Endothelial cell of umbilical vein (primary cell): ENCODE measurements at regions of chr12 and their contacts with region 1.

Region 1: DNA sequence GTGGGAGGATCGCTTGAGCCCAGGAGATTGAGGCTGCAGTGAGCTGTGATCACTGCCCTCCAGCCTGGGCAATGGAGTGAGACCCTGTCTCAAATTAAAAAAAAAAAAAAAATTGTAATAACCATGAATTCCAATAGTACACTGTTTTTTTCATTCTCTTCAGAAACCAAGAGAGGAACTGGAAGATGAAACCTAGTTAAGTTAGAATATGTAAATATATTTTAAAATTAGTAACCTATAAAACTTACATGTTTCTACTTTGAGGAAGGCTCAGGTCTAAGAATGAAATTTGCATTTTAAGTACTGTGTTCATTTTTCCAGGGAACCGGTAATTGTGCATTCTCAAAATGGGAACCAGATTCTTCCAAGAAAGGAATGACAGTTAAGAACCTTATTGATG is 18.8 kb downstream of the KNTC1 start:
- DNase-seq: no peak
- H3K4me3 ChIP-seq: no peak overlapping the region
- H3K27ac ChIP-seq: no peak overlapping the region
- H3K4me1 ChIP-seq: no peaks in the 10 kb centered on the region
- H3K27me3 ChIP-seq: no peaks in the 10 kb centered on the region
- CTCF ChIP-seq: no peak
- POLR2A ChIP-seq: no peak

Region 2: DNA sequence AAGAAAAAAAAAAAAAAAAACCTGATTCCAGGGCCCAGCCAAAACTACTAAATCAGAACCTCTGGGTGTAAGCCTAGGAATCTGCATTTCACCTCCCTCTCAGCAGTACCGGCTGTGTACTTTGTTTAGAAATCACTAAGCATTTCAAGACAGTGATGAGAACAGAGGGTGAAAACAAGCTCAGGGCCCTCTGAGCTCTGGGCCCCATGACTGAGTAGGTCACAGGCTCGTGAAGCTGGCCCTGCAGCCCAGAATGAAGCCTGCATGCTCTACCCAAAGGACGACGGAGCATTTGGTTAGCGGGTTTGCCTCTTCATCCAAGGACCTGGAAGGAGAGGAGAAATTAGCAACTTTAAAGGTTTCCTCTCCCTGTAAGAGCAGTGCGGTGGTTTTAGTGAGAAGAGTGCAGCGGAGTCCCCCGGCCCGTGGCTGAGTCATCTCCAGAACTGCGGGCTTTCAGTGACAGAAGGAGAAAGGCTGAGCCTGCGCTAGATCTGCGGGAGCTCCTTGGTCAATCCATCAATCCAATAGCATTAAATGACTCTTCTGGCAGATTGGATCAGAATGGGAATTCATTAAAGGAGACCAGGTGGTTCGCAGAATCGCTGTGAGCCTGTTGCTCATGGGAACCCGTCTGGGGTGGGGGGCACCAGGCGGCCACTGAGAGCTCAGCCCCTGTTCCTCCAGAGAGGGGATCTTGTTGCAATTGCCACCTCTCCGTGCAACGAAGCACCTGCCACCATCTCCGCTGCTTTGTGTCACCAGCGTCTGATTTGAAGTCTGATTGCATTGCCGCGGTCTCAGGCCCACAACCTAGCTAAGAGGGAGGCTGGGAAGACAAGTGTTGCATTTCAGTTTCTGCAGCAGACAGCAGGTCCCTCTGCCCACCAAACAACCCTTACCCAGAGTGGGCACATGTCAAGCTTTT is 379.2 kb before region 1 on chr12:
- CTCF ChIA-PET with region 1: no interaction called
- POLR2A ChIA-PET with region 1: no interaction called
- dilution Hi-C with region 1: no loop called
- intact Hi-C with region 1: no loop called
- DNase-seq: no peak
- H3K4me3 ChIP-seq: no peak overlapping the region
- H3K27ac ChIP-seq: no peak overlapping the region
- H3K4me1 ChIP-seq: no peaks in the 10 kb centered on the region
- H3K27me3 ChIP-seq: peaks cover 0 to 3% of the 10 kb centered on the region in 2 experiments
- CTCF ChIP-seq: no peak
- POLR2A ChIP-seq: no peak

Region 3: GRCh38 chr12:122366685-122367475 is 179.0 kb before region 1 on chr12:
- CTCF ChIA-PET with region 1: no interaction called
- POLR2A ChIA-PET with region 1: no interaction called
- dilution Hi-C with region 1: no loop called
- intact Hi-C with region 1: no loop called
- DNase-seq: peak; percentile 73
- H3K4me3 ChIP-seq: no peak overlapping the region
- H3K27ac ChIP-seq: peak overlapping the region; percentile 57
- H3K4me1 ChIP-seq: peaks cover 31% of the 10 kb centered on the region
- H3K27me3 ChIP-seq: no peaks in the 10 kb centered on the region
- CTCF ChIP-seq: no peak
- POLR2A ChIP-seq: no peak

Region 4: GRCh38 chr12:122569288-122569687 is 23.4 kb after region 1 on chr12:
- CTCF ChIA-PET with region 1: interaction called, 3 read pairs
- POLR2A ChIA-PET with region 1: no interaction called
- dilution Hi-C with region 1: no loop called
- intact Hi-C with region 1: loop called (anchors 2 kb)
- DNase-seq: no peak
- H3K4me3 ChIP-seq: no peak overlapping the region
- H3K27ac ChIP-seq: no peak overlapping the region
- H3K4me1 ChIP-seq: no peaks in the 10 kb centered on the region
- H3K27me3 ChIP-seq: no peaks in the 10 kb centered on the region
- CTCF ChIP-seq: no peak
- POLR2A ChIP-seq: no peak

Region 5: DNA sequence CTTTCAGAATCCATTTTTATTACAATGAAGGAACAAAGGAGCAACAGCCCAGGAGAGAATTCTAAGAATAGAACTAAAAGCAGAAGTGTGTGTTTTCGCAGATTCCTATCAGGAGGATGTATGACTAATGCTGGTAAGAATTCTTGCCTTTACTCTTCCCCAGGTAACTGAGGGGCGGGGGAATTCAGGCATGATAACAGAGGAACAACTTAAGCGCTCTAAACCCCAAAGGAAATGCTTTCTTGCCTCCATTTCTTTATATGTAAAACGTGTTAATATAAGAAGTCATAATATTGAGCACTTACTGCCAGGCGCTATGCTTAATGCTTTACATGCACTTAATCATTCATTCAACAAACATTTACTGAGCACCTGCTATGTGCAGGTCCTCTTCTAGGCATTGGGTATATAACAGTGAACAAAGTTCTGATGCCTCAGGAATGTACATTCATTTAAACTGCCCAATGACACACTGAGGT is 180.3 kb after region 1 on chr12:
- CTCF ChIA-PET with region 1: no interaction called
- POLR2A ChIA-PET with region 1: no interaction called
- dilution Hi-C with region 1: no loop called
- intact Hi-C with region 1: no loop called
- DNase-seq: peak; percentile 75
- H3K4me3 ChIP-seq: no peak overlapping the region
- H3K27ac ChIP-seq: peak overlapping the region; percentile 69
- H3K4me1 ChIP-seq: peaks cover 16% of the 10 kb centered on the region
- H3K27me3 ChIP-seq: no peaks in the 10 kb centered on the region
- CTCF ChIP-seq: no peak
- POLR2A ChIP-seq: no peak

Region 6: DNA sequence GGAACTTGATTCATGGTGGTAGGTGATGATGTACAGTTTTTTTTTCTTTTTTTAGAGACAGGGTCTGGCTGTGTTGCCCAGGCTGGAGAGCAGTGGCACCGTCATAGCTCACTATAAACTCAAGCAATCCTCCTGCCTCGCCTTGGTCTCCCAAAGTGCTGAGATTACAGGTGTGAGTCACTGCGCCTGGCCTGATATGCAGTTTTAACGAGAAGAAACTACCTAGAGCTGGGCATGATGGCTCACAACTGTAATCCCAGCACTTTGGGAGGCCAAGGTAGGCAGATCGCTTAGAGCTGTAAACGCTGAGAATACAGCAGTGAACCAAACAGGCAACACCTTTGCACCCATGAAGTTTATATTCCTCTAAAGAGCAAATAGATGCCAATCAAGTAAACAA is 363.1 kb after region 1 on chr12:
- CTCF ChIA-PET with region 1: no interaction called
- POLR2A ChIA-PET with region 1: no interaction called
- dilution Hi-C with region 1: no loop called
- intact Hi-C with region 1: no loop called
- DNase-seq: no peak
- H3K4me3 ChIP-seq: no peak overlapping the region
- H3K27ac ChIP-seq: no peak overlapping the region
- H3K4me1 ChIP-seq: no peaks in the 10 kb centered on the region
- H3K27me3 ChIP-seq: peaks cover under 1 to 1% of the 10 kb centered on the region in 2 experiments
- CTCF ChIP-seq: no peak
- POLR2A ChIP-seq: no peak